WTC11 (cell line): ENCODE measurements at regions of chr5 and their contacts with region 1.

Region 1: DNA sequence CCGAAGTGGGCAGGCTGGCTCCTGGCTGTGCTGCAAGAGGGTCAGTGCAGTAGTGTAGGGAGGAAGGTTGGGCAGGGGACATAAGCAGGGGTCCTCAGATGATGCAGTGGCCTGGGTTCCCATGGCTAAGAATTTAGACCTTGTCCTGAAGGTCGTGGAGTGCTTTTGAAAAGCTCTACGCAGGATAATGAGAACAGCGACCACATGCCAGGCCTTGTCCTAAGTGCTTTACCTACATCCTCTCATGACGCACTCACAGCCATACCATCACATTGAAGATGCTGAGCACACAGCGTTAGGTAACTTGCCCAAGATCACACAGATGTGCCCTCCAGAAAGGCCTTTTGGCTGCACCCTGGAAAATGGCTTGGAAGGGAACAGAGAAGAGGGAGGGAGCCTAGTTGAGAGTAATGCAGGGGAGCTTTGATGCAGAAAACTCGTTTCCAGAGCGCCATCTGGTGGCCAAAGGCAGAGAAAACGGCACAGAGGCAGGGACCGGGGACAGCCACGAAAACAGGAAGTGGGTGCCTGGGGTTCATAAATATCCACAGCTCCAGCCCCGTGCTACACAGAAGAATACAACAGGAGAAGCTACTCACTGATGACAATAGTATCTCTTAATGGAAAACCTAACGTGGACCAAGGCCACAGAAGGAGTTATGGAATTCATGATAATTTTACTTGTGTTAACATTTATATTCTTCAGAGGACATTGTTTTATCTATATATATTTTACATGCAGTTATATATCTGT is 2.6 kb upstream of the PCDH12 start:
- DNase-seq: peak; percentile 88
- ATAC-seq: peak; percentile 90
- H3K4me3 Mint-ChIP-seq: no peak overlapping the region
- H3K27ac Mint-ChIP-seq: 0 out of 2 replicates have a peak overlapping the region, but pooled peaks have one; percentile 24
- H3K4me1 Mint-ChIP-seq: peaks cover 38% of the 10 kb centered on the region
- H3K27me3 Mint-ChIP-seq: no peaks in the 10 kb centered on the region
- CTCF ChIP-seq: peak; percentile 91

Region 2: DNA sequence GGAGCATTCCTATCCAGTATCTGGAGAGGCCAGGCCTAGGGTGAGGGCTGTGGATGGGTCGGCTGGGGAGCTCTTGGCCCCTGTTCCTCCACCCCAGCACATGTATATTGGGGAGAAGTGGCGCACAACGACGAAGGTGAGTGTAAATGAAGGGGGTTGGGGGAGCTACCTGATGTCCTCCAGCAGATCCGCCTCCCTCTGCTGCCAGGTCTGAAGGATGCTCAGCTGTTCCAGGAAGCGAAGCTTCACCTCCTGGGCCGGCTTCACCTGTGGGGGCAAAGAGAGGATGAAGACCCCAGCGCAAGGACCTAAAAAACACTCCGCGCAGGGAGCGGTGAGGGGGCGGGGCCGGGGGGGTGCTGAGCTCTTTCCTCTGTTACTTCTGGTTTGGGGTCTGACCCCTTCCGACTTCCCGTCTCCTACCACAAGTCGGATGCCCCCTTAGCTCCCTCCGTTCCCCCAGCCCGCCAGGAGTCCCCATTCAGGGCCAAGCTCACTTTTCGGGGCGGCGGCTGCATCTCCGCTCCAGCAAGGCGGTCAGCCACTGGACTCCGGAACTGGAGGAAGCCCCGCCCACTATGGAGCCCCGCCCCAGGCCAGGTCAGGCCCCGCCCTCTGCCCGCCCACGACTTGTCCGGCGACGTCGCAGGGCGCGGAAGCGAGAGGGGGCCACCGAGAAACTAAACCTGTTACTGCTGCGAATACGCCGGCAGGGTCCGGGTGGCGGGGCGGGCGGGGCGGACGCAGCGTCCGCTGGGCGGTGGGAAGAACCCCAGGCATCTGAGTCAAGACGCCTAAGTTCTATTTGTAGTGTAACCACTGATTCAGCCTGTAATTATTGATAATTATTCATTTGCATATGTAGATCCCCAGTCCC is 309.5 kb before region 1 on chr5 and contains the start of gene FCHSD1:
- CTCF ChIA-PET with region 1: interaction called, 11 read pairs
- POLR2A ChIA-PET with region 1: no interaction called
- DNase-seq: peak; percentile 94
- ATAC-seq: peak; percentile 95
- H3K4me3 Mint-ChIP-seq: peak within 1 kb of the TSS; percentile 99
- H3K27ac Mint-ChIP-seq: peak within 1 kb of the TSS; percentile 96
- H3K4me1 Mint-ChIP-seq: peaks cover 20% of the 10 kb centered on the region
- H3K27me3 Mint-ChIP-seq: no peaks in the 10 kb centered on the region
- CTCF ChIP-seq: no peak
- total RNA-seq, gene FCHSD1: 43.6 to 50.3 TPM (median 44.8 TPM) in 3 replicates

Region 3: DNA sequence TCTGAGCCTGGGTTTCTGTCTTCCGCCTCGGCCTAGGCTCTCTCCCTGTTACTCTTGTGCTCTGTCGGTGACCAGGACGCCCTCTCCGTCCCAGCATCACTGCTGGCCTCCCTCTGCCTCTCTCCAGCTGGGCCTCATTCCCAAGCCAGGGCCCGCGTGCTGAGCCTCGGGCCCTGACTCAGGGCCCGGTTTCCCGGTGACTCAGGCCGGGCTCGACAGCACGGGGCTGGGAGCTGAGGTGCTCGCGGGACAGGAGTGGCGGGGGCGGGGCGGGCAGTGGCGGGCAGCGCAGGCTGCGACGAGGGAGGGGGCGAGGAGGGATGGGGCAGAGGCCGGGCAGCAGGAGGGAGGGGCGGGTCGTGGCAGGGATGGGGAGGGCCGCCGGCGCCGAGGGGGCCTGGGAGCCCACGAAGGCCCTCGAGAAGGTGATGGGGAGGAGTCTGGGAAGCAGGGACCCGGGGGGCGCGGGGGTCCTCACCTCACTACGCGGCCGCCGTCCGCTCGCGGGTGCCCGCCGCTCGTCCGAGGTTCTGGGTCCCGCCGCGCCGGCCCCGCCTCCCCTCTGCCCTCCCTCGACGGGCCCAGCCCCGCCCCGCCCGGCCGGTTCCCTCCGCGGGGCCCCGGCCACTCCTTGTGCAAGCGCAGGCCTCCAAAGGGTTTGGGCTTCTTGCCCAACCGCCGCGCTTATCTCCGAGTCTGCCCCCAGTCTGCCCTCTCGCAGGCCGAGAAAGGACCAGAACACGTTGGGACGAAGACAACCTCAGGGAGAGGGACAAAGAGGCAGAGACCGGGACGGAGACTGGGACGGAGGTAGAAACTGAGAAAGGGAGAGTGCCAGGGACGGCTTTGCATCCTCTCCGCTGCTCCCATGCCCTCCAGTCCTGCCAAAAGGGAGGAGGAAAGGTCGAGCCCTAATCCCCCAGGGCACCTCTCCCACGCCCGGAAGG is 278.7 kb before region 1 on chr5 and contains the start of gene ARAP3:
- CTCF ChIA-PET with region 1: interaction called, 29 read pairs
- POLR2A ChIA-PET with region 1: no interaction called
- DNase-seq: peak; percentile 76
- ATAC-seq: peak; percentile 50
- H3K4me3 Mint-ChIP-seq: peak within 1 kb of the TSS; percentile 84
- H3K27ac Mint-ChIP-seq: peak within 1 kb of the TSS; percentile 96
- H3K4me1 Mint-ChIP-seq: peaks cover 50% of the 10 kb centered on the region
- H3K27me3 Mint-ChIP-seq: no peaks in the 10 kb centered on the region
- CTCF ChIP-seq: no peak
- total RNA-seq, gene ARAP3: 51.2 to 60.4 TPM (median 53.4 TPM) in 3 replicates

Region 4: GRCh38 chr5:141757402-141757801 is 203.2 kb before region 1 on chr5:
- CTCF ChIA-PET with region 1: interaction called, 19 read pairs
- POLR2A ChIA-PET with region 1: no interaction called
- DNase-seq: peak; percentile 70
- ATAC-seq: peak; percentile 62
- H3K4me3 Mint-ChIP-seq: peak overlapping the region; percentile 24; the same call in 1 of the 2 replicates
- H3K27ac Mint-ChIP-seq: no peak overlapping the region
- H3K4me1 Mint-ChIP-seq: peaks cover 49% of the 10 kb centered on the region
- H3K27me3 Mint-ChIP-seq: peaks cover 21% of the 10 kb centered on the region
- CTCF ChIP-seq: 0 out of 2 replicates have a peak, but pooled peaks have one; percentile 13

Region 5: GRCh38 chr5:141889282-141889871 is 71.2 kb before region 1 on chr5:
- CTCF ChIA-PET with region 1: interaction called, 30 read pairs
- POLR2A ChIA-PET with region 1: no interaction called
- DNase-seq: no peak
- ATAC-seq: no peak
- H3K4me3 Mint-ChIP-seq: no peak overlapping the region
- H3K27ac Mint-ChIP-seq: peak overlapping the region; percentile 19; the same call in 1 of the 2 replicates
- H3K4me1 Mint-ChIP-seq: peaks cover 5% of the 10 kb centered on the region; the same call in 1 of the 2 replicates
- H3K27me3 Mint-ChIP-seq: no peaks in the 10 kb centered on the region
- CTCF ChIP-seq: no peak

Region 6: GRCh38 chr5:141929398-141930058 is 31.1 kb before region 1 on chr5:
- CTCF ChIA-PET with region 1: interaction called, 21 read pairs
- POLR2A ChIA-PET with region 1: no interaction called
- DNase-seq: no peak
- ATAC-seq: peak; percentile 26; the same call in 1 of the 2 replicates
- H3K4me3 Mint-ChIP-seq: no peak overlapping the region
- H3K27ac Mint-ChIP-seq: no peak overlapping the region; the same call in 1 of the 2 replicates
- H3K4me1 Mint-ChIP-seq: peaks cover 10% of the 10 kb centered on the region; the same call in 1 of the 2 replicates
- H3K27me3 Mint-ChIP-seq: no peaks in the 10 kb centered on the region
- CTCF ChIP-seq: no peak

Region 7: GRCh38 chr5:142087920-142088679 is 127.5 kb after region 1 on chr5:
- CTCF ChIA-PET with region 1: no interaction called
- POLR2A ChIA-PET with region 1: no interaction called
- DNase-seq: no peak
- ATAC-seq: no peak
- H3K4me3 Mint-ChIP-seq: no peak overlapping the region
- H3K27ac Mint-ChIP-seq: no peak overlapping the region
- H3K4me1 Mint-ChIP-seq: no peaks in the 10 kb centered on the region
- H3K27me3 Mint-ChIP-seq: peaks cover 9% of the 10 kb centered on the region; the same call in 1 of the 2 replicates
- CTCF ChIP-seq: no peak

Region 8: DNA sequence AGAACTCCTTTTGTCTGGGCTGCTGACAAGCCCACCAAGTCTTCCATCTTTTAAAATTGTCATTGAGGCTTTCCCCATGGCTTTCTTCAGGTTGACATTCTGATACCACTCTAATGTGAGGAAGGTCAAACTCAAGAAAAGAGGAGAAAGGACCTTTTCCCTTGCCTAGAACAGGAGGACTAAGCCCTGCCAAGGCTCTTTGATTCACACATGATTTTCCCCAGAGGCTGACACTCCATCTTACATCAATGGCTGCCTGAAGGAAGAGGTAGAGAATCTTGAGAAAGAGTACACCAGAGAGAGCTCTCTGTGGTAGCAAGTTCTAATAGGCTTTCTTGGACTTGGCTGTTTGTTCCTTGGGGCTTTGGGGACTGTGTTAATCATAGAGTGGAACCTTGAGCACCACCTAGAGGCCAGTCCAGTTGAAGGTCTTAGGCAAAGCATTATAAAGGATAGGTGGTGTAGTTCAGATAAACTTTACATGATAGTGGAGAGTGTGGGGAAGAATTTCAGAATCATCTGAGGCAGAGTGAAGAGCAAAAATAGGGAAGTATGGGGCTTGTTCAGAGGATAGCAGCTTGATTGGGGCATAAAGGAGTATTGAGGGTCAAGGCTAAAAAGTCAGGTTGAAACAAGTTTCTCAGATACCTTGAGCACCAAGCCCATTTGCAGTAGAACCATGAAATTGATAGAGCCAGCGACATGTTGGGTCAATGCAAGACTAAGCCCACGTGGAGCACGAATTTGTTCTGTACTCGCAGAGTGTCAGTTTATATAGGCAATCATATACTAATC is 184.7 kb after region 1 on chr5:
- CTCF ChIA-PET with region 1: interaction called, 13 read pairs
- POLR2A ChIA-PET with region 1: no interaction called
- DNase-seq: peak; percentile 70
- ATAC-seq: peak; percentile 98
- H3K4me3 Mint-ChIP-seq: no peak overlapping the region
- H3K27ac Mint-ChIP-seq: no peak overlapping the region
- H3K4me1 Mint-ChIP-seq: 0 out of 2 replicates have a peak, but pooled peaks cover 1% of the 10 kb centered on the region
- H3K27me3 Mint-ChIP-seq: no peaks in the 10 kb centered on the region
- CTCF ChIP-seq: no peak; the same call in 1 of the 2 replicates

Region 9: DNA sequence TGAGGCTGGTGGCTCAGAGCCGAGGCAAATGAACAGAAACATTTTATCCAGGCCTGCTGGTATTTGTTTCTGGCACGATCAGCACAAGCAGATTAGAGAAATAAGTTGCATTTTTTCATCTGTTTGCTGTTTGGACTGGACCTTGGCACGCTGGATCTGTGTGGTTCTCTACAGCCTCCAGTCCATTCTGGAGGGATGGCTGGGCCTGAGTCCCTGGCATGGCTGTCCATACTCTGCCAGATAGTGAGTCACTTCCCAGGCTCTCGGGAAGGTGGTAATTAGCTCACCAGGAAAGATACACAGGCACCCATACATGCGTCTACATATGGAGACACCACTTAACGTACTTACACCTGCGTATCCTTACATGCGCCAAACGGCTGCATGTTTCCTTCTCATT is 285.6 kb after region 1 on chr5:
- CTCF ChIA-PET with region 1: no interaction called
- POLR2A ChIA-PET with region 1: no interaction called
- DNase-seq: no peak
- ATAC-seq: no peak; the same call in 1 of the 2 replicates
- H3K4me3 Mint-ChIP-seq: no peak overlapping the region
- H3K27ac Mint-ChIP-seq: peak overlapping the region; percentile 36; the same call in 1 of the 2 replicates
- H3K4me1 Mint-ChIP-seq: peaks cover 21% of the 10 kb centered on the region
- H3K27me3 Mint-ChIP-seq: peaks cover 6% of the 10 kb centered on the region
- CTCF ChIP-seq: no peak